BJ (cell line): ENCODE measurements at regions of chr13 and their contacts with region 1.

Region 1: DNA sequence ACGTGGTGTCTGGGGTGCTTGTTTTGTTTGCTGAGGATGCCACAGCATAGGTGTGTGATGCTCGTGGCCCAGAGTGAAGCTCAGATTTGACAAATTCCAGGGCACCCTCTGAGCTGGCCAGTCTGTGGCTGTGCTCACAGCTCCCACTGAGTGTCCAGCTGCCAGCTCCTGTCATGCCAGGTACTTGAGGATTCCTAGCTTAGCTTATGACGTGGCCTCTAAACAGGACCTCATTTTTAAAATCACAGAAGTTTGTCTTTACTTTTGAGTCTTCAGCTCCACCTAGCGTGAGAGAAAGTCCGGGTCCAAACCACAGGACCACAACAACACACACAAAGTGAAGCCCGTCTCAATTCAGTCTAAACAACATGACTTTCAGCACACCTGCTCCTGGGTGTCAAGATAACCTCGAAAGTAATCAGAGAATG is 117.3 kb downstream of the RAB20 start:
- DNase-seq: no peak
- H3K4me3 ChIP-seq: no peak overlapping the region
- H3K27me3 ChIP-seq: no peaks in the 10 kb centered on the region
- CTCF ChIP-seq: peak; percentile 39; the same call in 1 of the 2 replicates

Region 2: DNA sequence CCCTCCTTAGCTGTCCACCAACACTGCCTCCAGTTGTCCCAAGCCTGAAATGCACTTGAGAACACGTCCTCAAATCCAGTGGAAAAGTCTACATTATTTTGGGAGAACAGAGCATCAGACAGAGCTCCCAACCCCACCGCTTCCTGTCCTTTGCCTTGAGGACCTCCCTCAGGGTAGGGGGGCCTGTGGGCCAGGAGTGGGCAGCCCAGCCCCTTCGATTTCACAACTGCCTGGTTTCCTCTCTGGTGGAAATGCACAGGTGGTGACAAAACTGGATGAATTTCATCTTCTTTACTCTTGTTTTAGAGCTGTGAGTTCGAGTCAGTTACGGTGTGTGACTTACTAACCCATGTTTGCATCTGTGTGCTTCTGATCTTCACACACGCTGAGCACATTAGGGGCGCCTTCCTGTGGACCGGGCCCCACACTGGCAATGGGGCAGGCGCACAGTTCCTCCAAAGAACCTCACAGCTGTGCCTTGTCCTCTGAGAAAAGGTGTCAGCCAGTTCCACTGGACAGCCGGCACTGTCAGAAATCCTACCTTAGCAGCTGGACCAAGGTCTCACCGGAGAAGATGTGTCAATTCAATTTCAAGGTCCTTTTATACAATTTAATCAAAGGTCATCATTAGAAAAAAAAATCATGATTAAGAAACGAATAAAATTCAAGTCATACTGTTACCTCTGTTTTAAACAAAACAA is 738.1 kb before region 1 on chr13:
- CTCF ChIA-PET with region 1: no interaction called
- POLR2A ChIA-PET with region 1: interaction called, 15 read pairs
- DNase-seq: no peak
- H3K4me3 ChIP-seq: no peak overlapping the region
- H3K27me3 ChIP-seq: peaks cover 4% of the 10 kb centered on the region
- CTCF ChIP-seq: no peak

Region 3: DNA sequence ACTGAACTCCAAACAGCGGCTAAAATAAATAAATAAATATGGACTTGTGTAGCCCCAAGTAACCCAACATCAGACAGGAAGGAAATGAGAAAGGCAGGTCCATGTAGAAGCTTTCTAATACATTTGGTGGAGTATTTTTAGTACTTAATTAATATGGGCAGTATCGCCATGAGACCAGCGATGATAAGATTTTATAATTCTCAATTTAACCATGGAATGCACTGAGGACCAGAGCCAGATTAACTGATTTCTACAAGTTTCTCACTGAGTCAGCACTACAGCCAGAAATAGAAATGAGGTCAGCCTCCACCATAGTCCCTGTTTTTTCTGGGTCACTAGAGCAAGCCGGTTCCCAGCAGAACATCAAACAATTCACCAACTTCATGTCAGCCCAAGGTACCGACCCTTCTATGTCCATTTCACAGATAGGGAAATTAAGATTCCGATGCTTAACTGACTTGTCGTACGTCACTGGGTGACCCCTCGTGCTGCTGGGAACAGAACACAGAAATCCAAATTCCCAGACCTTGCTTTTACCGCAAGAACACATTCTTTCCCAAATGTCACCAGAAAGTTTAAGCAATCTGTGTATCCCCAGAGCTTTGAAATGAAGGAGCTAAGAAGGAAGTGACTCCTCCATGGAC is 227.7 kb before region 1 on chr13:
- CTCF ChIA-PET with region 1: interaction called, 20 read pairs
- POLR2A ChIA-PET with region 1: no interaction called
- DNase-seq: no peak
- H3K4me3 ChIP-seq: no peak overlapping the region
- H3K27me3 ChIP-seq: no peaks in the 10 kb centered on the region
- CTCF ChIP-seq: no peak

Region 4: GRCh38 chr13:110224519-110224918 is 219.7 kb before region 1 on chr13:
- CTCF ChIA-PET with region 1: interaction called, 20 read pairs
- POLR2A ChIA-PET with region 1: no interaction called
- DNase-seq: no peak
- H3K4me3 ChIP-seq: no peak overlapping the region
- H3K27me3 ChIP-seq: no peaks in the 10 kb centered on the region
- CTCF ChIP-seq: no peak